ENCODE measurements at regions of chr1 and their contacts with region 1.

Region 1: DNA sequence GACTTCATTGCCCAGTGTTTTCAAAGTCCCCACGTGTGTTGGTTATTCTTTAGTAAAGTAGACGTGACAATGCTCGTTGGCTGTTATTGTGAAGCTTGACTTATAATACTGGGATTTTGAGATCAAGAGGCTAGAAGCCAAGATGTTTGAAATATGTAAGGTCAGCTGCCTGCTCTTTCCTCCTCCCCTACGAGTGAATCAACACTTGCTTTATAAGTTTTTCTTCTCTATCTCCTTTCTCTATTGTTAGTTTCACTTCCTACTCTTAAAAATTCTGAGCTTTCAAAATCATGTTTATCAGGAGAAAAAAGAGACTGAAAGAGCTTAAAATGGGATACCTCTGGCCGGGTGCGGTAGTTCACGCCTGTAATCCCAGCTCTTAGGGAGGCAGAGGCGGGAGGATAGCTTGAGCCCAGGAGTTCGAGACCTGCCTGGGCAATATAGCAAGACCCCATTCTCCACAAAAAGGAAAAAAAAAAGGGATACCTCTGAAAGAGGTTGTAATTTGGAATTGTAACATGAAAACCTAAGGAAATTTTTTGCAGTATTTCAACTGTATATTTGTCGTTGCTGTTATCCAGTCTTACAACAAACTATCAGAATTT is 72.0 kb downstream of the EPB41 start:
- H3K4me3 ChIP-seq: no peak overlapping the region
- H3K27ac ChIP-seq: no peak overlapping the region
- H3K4me1 ChIP-seq: no peaks in the 10 kb centered on the region
- CTCF ChIP-seq: no peak

Region 2: GRCh38 chr1:29002792-29003191 is 16.4 kb after region 1 on chr1:
- CTCF ChIA-PET with region 1: interaction called, 13 read pairs
- POLR2A ChIA-PET with region 1: no interaction called
- H3K4me3 ChIP-seq: no peak overlapping the region
- H3K27ac ChIP-seq: no peak overlapping the region
- H3K4me1 ChIP-seq: no peaks in the 10 kb centered on the region
- CTCF ChIP-seq: no peak

Measured in HEK293 (cell line).